Kidney (tissue), 22 donors: ENCODE measurements at regions of chr2 and their contacts with region 1.

Region 1: DNA sequence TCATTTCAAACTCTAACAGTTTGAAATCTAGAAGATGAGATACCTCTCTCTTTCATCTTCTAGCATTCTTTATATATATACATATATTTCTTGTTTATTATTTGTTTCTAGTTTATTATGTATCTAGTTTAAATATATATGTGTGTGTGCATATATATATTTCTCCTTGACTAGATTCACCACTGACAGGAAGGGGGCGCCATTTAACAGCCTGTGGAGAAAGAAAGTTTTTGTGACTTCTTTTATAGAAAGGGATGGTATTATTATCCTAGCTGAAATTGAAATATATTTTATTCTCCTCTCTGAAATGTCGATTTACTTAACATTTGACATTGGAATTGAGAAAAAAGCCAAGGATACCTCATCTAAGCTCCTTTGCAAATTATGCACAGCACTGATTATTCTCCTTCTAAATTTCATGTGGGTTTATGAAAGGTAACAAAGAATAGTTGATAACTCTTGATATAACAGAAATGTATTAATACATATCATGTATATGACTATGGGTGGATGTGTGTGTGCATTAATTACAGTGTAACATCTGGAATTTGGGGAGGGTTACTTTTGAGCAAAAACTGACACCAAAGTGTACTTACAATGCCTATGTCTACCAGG is 160.7 kb upstream of the NT5C1B start:
- DNase-seq: peak in 4 of 5 donors; percentile 51 to 91 (median 73)
- H3K4me3 ChIP-seq: no peak overlapping the region
- H3K27ac ChIP-seq: no peak overlapping the region
- H3K4me1 ChIP-seq: peaks cover 0 to 3% (median 0%) of the 10 kb centered on the region in 3 donors
- H3K27me3 ChIP-seq: no peaks in the 10 kb centered on the region
- CTCF ChIP-seq: peak; percentile 83

Region 2: DNA sequence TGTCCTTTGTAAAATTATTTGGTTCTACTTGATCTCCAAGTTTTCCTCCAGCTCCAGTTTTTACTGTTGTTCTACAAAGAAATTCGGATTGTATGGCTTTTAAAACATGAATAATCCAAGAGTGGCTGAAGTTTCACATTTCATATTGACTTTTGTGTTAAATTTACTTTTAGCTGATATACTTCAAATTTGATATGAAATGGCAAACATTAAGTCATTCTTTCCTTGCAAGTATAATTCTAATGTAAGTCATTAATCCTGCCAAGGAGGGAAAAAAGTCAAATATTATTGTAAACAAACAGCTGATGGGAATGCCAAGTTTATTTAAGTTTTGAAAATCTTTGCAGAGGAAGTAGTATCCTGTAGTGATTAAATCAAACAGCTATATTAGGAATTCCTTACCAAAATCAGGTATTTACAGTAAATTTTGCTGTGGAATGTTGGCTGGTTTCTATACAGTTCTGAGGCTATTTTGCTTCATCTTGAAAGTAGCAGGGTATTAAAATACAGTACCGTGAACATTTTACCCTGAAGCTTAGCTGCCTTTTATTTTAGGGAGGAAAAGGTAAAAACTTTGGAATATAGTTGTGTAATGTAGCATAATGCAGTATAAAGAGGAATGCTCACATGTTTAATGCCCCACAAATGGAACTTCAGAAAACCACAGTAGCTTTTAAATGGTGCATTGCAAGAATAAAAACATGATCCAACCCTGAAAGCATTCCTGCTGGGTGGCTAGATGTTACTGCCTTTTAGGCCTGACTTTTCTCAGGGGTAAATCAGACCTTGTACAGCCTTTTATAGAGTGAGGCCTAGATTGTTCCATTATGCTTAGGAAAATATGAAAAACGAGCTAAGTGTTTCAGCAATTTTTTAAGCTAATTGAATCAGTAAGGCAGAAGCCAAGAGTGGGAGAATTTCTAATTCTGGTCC is 97.9 kb before region 1 on chr2:
- intact Hi-C with region 1: no loop called
- DNase-seq: no peak
- H3K4me3 ChIP-seq: no peak overlapping the region
- H3K27ac ChIP-seq: no peak overlapping the region
- H3K4me1 ChIP-seq: peaks cover 0 to 5% (median 0%) of the 10 kb centered on the region in 3 donors
- H3K27me3 ChIP-seq: no peaks in the 10 kb centered on the region
- CTCF ChIP-seq: no peak

Region 3: GRCh38 chr2:19371996-19372582 is 622.1 kb after region 1 on chr2:
- intact Hi-C with region 1: loop called (anchors 5 kb)
- DNase-seq: no peak
- H3K4me3 ChIP-seq: no peak overlapping the region
- H3K27ac ChIP-seq: no peak overlapping the region
- H3K4me1 ChIP-seq: no peaks in the 10 kb centered on the region
- H3K27me3 ChIP-seq: no peaks in the 10 kb centered on the region
- CTCF ChIP-seq: no peak